ENCODE measurements at regions of chr5 and their contacts with region 1.

Region 1: DNA sequence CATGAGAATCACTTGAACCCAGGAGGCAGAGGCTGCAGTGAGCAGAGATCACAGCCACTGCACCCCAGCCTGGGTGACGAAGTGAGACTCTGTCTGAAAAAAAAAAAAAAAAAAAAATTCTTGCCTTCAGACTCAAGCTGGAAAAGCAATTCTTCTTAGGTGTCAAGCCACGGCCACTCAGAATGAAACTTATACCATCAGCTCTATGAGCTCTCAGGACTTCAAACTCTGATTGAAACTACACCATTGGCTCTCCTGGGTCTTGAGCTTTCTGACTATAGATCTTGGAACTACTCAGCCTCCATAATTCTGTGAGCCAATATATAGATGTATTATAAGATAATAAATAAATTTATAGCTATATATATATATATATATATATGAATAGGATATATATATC is 12.9 kb upstream of the FGF10 start:
- DNase-seq: no peak
- H3K4me3 ChIP-seq: no peak overlapping the region
- H3K4me3 Mint-ChIP-seq: no peak overlapping the region
- H3K27ac Mint-ChIP-seq: no peak overlapping the region
- H3K4me1 ChIP-seq: no peaks in the 10 kb centered on the region
- H3K4me1 Mint-ChIP-seq: no peaks in the 10 kb centered on the region
- H3K27me3 ChIP-seq: no peaks in the 10 kb centered on the region
- H3K27me3 Mint-ChIP-seq: no peaks in the 10 kb centered on the region
- CTCF ChIP-seq: no peak

Region 2: DNA sequence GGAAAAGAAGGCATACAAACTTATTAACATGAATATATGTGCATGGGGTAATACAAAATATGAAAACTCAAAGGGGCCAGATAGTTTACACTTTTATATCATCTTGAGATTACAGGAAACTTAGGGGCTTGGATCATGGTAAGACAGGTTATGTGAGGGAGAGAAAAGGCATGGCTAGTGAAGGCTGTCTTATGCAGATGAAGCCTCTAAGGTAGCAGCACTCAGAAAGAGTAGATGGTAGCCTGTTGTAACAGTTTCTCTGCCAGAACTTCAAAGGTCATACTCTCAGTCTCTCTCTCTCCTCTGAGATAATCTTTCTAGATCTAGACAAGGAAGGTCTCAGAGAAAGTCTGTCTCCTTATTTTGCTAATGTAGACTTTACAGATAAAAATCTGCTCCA is 44.3 kb after region 1 on chr5:
- CTCF ChIA-PET with region 1: no interaction called
- POLR2A ChIA-PET with region 1: no interaction called
- intact Hi-C with region 1: loop called (anchors 1 kb)
- DNase-seq: no peak
- H3K4me3 ChIP-seq: no peak overlapping the region
- H3K4me3 Mint-ChIP-seq: no peak overlapping the region
- H3K27ac Mint-ChIP-seq: no peak overlapping the region
- H3K4me1 ChIP-seq: no peaks in the 10 kb centered on the region
- H3K4me1 Mint-ChIP-seq: no peaks in the 10 kb centered on the region
- H3K27me3 ChIP-seq: no peaks in the 10 kb centered on the region
- H3K27me3 Mint-ChIP-seq: no peaks in the 10 kb centered on the region
- CTCF ChIP-seq: no peak